Heart left ventricle (tissue), 16 donors: ENCODE measurements at regions of chr13 and their contacts with region 1.

Region 1: DNA sequence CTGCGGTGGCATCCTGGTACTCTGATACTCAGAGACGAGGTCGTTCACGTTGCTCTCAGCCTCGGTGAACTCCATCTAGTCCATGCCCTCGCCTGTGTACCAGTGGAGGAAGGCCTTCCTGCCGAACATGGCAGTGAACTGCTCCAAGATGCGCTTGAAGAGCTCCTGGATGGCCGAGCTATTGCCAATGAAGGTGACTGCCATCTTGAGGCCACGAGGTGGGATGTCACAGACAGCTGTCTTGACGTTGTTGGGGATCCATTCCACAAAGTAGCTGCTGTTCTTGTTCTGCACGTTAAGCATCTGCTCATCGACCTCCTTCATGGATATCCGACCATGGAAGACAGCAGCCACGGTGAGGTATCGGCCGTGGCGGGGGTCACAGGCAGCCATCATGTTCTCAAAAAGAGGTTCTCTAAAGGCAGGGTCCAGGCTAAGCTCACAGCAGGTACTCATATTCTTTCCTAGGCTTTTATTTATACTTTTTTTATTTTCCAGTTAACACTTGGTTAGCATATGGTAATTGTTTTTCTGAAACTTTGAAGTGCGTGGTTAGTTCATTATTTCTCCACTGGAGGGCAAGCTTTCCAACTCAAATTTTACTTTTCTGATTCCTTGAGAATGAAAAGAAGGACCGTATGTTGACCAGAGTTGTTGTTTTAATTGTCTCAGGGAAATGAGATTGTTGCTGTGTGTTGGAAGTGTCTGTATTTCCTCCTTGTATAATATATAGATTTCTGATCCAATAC is 72.4 kb upstream of the RGCC start:
- DNase-seq: no peak
- ATAC-seq: no peak
- H3K4me3 ChIP-seq: no peak overlapping the region
- H3K27ac ChIP-seq: no peak overlapping the region
- H3K4me1 ChIP-seq: peaks cover 0 to 20% (median 12%) of the 10 kb centered on the region in 12 donors
- H3K27me3 ChIP-seq: no peaks in the 10 kb centered on the region
- CTCF ChIP-seq: peak; percentile 20 to 49 (median 34)
- POLR2A ChIP-seq: no peak

Region 2: GRCh38 chr13:41562083-41562482 is 177.2 kb after region 1 on chr13:
- intact Hi-C with region 1: loop called in 1 of 10 experiments (anchors 10 kb)
- DNase-seq: peak in 4 of 5 donors; percentile 58 to 80 (median 70)
- ATAC-seq: peak; percentile 63 to 79 (median 70)
- H3K4me3 ChIP-seq: no peak overlapping the region
- H3K27ac ChIP-seq: peak overlapping the region in 4 of 12 donors; percentile 15 to 37 (median 24)
- H3K4me1 ChIP-seq: peaks cover 0 to 40% (median 31%) of the 10 kb centered on the region in 12 donors
- H3K27me3 ChIP-seq: no peaks in the 10 kb centered on the region
- CTCF ChIP-seq: no peak
- POLR2A ChIP-seq: no peak